ENCODE measurements at regions of chr5 and their contacts with region 1.

Region 1: GRCh38 chr5:112146323-112147226 is 272.5 kb downstream of the EPB41L4A start:
- DNase-seq: peak; percentile 56
- ATAC-seq: peak; percentile 93
- H3K4me3 ChIP-seq: no peak overlapping the region
- H3K27ac ChIP-seq: no peak overlapping the region
- H3K4me1 ChIP-seq: no peaks in the 10 kb centered on the region
- H3K27me3 ChIP-seq: no peaks in the 10 kb centered on the region
- CTCF ChIP-seq: peak; percentile 82
- EP300 ChIP-seq: no peak
- POLR2A ChIP-seq: no peak
- RAD21 ChIP-seq: peak; percentile 74

Region 2: DNA sequence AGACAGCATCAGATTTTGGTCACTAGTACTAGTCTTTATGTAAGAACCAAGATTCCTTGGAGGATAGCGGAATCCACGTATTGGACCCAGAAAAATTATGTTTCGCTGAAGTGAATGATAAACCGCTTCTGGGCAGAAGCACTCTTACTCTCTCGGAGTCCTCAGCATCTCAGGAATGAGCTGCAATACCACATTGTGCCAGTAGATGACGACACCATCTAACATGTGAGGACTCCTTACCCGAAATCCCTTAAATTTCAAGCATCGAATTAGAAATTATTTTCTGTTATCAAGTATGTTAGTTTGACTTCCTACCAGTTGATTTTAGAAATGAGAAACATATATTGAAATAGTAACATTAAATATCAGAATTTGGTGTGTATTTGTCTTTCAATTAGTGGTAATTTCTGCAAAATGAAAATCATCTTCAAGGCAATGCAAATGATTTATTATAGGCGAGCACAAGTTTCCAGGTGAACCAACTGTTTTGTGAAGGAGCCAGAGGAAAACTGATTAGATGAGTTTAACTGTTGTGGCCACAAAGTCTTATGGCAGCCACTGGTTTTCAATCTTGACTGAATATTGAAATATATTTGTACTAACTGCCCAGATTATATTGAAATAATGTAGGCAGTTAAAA is 988.4 kb before region 1 on chr5:
- CTCF ChIA-PET with region 1: interaction called, 9 read pairs
- POLR2A ChIA-PET with region 1: no interaction called
- in situ Hi-C with region 1: loop called (anchors 10 kb)
- intact Hi-C with region 1: loop called (anchors 2 kb)
- DNase-seq: peak; percentile 56
- ATAC-seq: peak; percentile 78
- H3K4me3 ChIP-seq: no peak overlapping the region
- H3K27ac ChIP-seq: no peak overlapping the region
- H3K4me1 ChIP-seq: no peaks in the 10 kb centered on the region
- H3K27me3 ChIP-seq: no peaks in the 10 kb centered on the region
- CTCF ChIP-seq: peak; percentile 85
- EP300 ChIP-seq: no peak
- POLR2A ChIP-seq: no peak
- RAD21 ChIP-seq: peak; percentile 67

Region 3: DNA sequence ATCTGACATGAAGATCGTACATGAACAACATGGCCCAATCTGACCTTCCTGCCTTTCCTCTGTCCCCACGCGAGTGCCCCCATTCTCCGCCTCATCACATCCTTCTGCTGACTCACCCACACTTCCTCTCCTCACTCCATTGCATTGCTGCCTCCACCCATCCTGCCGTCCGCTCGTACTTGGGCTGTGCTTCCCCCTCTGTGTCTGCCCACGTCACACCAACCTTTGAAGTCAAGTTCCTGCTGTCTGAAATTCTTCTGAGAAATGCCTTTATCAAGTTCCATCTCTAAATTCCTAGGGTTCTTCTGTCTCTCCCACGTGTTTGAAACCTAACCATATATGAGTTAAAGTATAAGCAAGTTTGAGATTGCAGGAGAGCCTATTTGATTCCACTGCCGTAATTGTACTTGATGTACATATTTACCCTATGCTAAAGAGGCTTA is 616.3 kb before region 1 on chr5:
- CTCF ChIA-PET with region 1: interaction called, 8 read pairs
- POLR2A ChIA-PET with region 1: no interaction called
- in situ Hi-C with region 1: no loop called
- intact Hi-C with region 1: loop called (anchors 1 kb)
- DNase-seq: peak; percentile 15
- ATAC-seq: peak; percentile 78
- H3K4me3 ChIP-seq: peak overlapping the region in 1 of 3 experiments; percentile 49; a peak in 1 of 6 replicates
- H3K27ac ChIP-seq: no peak overlapping the region
- H3K4me1 ChIP-seq: peaks cover 8% of the 10 kb centered on the region; the same call in 1 of the 2 replicates
- H3K27me3 ChIP-seq: no peaks in the 10 kb centered on the region
- CTCF ChIP-seq: no peak
- EP300 ChIP-seq: no peak
- POLR2A ChIP-seq: no peak
- RAD21 ChIP-seq: no peak

Region 4: DNA sequence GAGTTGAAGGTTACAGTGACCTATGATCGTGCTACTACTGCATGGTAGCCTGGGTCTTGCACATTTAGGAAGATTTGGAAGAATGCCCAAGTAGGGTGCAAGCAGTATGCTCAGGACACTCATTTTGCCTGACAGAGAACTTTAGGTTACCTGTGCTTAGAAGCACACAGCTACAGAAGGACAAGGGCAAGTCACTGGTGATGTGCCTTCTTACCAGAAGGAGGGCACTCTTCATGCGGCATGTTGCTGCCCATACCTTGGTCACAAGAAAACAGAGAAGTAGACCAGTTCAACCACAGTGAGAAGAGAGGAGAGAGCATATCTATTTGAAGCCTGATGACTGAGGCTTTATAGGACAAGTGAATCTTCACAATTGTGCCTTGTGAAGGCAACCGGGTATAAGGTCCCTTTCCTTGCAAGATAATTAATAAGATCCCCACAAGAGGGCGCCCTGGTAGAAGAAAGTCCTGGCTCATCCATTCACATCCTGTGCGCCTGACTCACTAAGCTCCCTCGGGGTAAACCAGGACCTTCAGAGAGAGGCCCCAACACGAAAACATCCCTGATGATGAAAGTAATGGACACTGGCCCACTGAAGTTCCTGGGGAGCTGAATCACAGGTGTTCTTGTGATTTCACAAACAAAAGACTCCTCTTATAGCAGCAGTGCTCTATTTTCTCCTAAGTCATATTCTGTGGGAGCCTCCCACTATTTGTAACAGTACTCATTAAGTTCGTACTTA is 596.1 kb before region 1 on chr5:
- CTCF ChIA-PET with region 1: interaction called, 38 read pairs
- POLR2A ChIA-PET with region 1: no interaction called
- in situ Hi-C with region 1: loop called (anchors 5 kb)
- intact Hi-C with region 1: loop called (anchors 1 kb)
- DNase-seq: peak; percentile 63
- ATAC-seq: peak; percentile 97
- H3K4me3 ChIP-seq: no peak overlapping the region
- H3K27ac ChIP-seq: no peak overlapping the region
- H3K4me1 ChIP-seq: no peaks in the 10 kb centered on the region
- H3K27me3 ChIP-seq: no peaks in the 10 kb centered on the region
- CTCF ChIP-seq: peak; percentile 77
- EP300 ChIP-seq: no peak
- POLR2A ChIP-seq: no peak
- RAD21 ChIP-seq: peak; percentile 64

Region 5: DNA sequence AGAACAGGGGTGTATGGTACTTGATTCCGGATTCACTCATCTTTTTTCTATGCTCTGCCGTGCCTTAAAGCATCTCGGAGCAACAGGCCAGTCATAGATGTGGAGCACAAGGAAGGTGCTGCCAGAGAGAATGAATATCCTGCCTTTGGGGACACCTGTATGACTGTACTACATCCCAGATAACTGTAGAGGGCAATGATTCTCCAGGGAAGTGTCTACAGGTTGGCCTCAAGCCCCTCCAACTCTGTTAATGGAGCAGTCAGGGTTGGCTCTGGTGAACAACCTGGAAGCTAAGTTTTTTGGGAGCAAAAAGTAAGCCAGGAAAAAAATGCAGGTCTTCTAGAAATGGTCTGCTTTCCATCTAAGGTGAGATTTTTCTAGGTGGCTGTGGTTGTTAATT is 460.6 kb before region 1 on chr5:
- CTCF ChIA-PET with region 1: interaction called, 6 read pairs
- POLR2A ChIA-PET with region 1: no interaction called
- in situ Hi-C with region 1: loop called (anchors 5 kb)
- intact Hi-C with region 1: loop called (anchors 1 kb)
- DNase-seq: peak; percentile 63
- ATAC-seq: peak; percentile 95
- H3K4me3 ChIP-seq: no peak overlapping the region
- H3K27ac ChIP-seq: no peak overlapping the region
- H3K4me1 ChIP-seq: peaks cover 13% of the 10 kb centered on the region
- H3K27me3 ChIP-seq: no peaks in the 10 kb centered on the region
- CTCF ChIP-seq: peak; percentile 82
- EP300 ChIP-seq: no peak
- POLR2A ChIP-seq: no peak
- RAD21 ChIP-seq: peak; percentile 78

Measured in HepG2 (cell line).